ENCODE measurements at regions of chr1 and their contacts with region 1.

Region 1: DNA sequence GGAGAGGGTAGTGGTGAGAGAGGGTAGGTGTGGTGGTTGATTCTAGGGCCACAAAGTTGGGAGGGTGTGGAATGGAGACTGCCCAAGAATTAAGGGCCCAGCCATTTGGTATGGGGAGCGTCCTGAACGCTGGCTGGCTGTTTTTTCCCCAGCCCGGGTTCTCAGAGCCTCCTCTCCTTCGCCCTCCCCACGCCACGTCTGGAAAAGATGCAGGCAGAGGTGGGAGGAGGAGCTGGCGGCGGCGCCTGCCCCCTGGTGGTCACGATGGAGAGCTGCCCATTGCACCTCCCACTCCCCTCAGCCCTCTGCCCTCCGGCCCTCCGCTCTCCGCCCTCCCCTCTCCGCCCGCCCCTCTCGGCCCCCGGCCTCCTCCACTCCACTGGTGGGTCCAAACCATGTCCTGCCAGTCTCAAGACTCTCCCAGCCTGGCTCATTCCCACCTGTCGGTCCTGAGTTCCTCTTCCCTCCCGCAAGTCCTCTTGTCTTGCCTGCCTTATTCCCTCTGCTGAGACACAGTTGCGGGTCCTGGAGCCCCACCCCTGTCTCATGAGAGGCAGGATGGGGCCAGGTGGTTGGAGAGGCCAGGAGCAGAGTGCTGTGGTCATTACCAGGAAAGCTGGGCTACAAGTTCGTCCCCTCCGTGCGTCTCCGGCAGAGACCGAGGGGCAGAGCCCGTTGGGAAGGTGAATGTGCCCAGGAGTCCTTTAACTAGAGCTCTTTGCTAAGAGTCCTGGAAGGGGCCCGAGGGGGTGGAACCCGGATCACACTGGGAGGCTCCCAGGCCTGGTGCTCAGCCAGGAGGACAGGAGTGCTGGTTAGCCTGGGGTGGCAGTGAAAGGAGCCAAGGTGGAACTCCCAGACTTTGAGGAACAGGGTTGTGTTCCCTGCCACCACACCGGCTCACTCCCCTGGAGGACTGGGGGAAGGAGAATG is 22.6 kb downstream of the ETNK2 start:
- H3K4me3 ChIP-seq: no peak overlapping the region
- H3K27ac ChIP-seq: no peak overlapping the region
- H3K4me1 ChIP-seq: 0 out of 2 replicates have a peak, but pooled peaks cover 3% of the 10 kb centered on the region
- CTCF ChIP-seq: peak; percentile 83

Region 2: GRCh38 chr1:203861379-203862184 is 267.6 kb before region 1 on chr1 and contains the start of gene SNRPE:
- CTCF ChIA-PET with region 1: interaction called, 63 read pairs
- POLR2A ChIA-PET with region 1: interaction called, 5 read pairs
- H3K4me3 ChIP-seq: peak within 1 kb of the TSS; percentile 94
- H3K27ac ChIP-seq: peak within 1 kb of the TSS; percentile 40; the same call in 1 of the 2 replicates
- H3K4me1 ChIP-seq: peaks cover 5% of the 10 kb centered on the region
- CTCF ChIP-seq: peak; percentile 99

Region 3: DNA sequence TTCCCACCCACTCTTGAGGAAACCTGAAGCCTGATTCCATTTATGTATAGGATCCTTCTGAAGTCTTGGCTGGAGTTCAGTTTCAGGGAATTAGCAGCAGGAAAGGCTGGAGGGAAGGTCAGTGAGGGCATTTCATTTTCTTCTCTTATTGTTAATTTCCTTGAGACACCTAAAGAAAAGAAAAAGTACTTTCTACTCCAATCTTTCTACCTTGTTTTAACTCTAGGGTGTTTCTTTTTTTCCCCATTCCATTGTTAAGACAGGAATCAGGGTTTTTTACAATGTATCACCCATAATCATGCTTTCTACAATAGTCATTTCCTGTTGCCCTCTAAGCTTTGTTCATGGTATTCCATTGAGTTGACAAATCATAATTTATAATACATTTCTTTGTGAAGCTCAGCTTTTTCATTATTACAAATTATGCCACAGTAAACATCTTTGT is 240.4 kb before region 1 on chr1:
- CTCF ChIA-PET with region 1: interaction called, 10 read pairs
- POLR2A ChIA-PET with region 1: no interaction called
- H3K4me3 ChIP-seq: no peak overlapping the region
- H3K27ac ChIP-seq: no peak overlapping the region
- H3K4me1 ChIP-seq: no peaks in the 10 kb centered on the region
- CTCF ChIP-seq: no peak

Region 4: DNA sequence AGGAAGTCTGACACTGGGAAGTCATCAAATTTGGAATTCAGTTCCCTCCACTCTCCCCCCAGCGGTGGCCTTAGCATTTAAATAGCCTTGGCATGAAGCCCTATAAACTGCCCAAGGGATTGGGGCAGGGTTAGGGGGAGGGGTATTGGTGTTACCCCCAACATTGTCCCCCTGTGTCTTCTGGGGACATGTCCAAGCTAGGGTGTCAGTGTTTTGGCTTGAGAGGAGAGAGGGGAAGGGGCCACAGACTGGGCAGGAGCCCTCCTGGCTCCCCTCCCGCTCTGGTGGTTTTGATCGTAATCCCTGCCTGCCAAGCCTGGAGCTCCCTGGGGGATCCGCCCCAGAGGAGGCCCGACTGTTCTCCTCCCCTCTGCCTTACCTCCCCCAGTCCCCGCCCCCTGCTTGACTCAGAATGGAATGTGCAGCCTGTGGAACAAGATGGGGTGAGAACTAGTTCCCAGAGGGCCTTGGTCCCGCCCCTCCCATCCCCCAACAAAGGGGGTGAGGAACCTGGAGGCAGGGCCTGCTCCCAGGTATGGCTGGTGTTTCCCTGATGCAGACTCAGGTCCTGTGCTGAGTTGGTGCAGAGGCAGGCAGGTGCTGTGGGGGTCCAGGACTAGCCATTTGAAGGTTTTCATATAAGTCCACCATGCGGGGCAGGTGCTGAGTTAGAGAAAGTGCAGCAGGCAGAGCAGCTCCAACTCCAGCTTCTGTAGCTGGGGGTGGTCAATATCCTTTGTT is 48.9 kb before region 1 on chr1:
- CTCF ChIA-PET with region 1: interaction called, 10 read pairs
- POLR2A ChIA-PET with region 1: no interaction called
- H3K4me3 ChIP-seq: no peak overlapping the region
- H3K27ac ChIP-seq: peak overlapping the region; percentile 51
- H3K4me1 ChIP-seq: peaks cover 29% of the 10 kb centered on the region
- CTCF ChIP-seq: 0 out of 2 replicates have a peak, but pooled peaks have one; percentile 13